ENCODE measurements at regions of chr1 and their contacts with region 1.

Region 1: GRCh38 chr1:32876341-32877210 is 5.9 kb upstream of the FNDC5 start:
- DNase-seq: no peak
- ATAC-seq: peak; percentile 90
- H3K4me3 ChIP-seq: no peak overlapping the region
- H3K27ac ChIP-seq: no peak overlapping the region
- H3K4me1 ChIP-seq: peaks cover 10% of the 10 kb centered on the region
- H3K27me3 ChIP-seq: peaks cover 5% of the 10 kb centered on the region in 2 experiments; a peak in 2 of 4 replicates
- CTCF ChIP-seq: peak; percentile 79 to 98 (median 95)
- EP300 ChIP-seq: no peak
- POLR2A ChIP-seq: no peak
- RAD21 ChIP-seq: peak; percentile 51; the same call in 1 of the 2 replicates

Region 2: DNA sequence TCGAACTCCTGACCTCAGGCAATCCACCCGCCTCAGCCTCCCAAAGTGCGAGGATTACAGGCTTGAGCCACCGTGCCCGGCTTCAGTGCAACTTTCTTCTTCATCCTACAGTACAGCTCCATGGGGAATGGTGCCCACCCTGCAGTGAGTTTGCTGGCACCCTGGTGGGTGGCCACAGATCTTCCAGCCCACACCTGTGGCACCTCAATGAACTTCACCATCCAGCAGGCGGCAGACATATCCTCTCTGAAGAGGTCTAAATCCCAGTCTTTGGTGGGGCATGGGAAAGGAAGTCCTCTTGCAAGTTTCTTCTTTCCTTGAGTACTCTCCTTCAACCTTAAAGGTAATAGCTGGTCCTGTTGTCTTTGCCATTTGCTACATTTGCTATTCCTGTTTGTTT is 355.4 kb before region 1 on chr1:
- CTCF ChIA-PET with region 1: interaction called, 13 read pairs
- POLR2A ChIA-PET with region 1: no interaction called
- RAD21 ChIA-PET with region 1: interaction called, 14 read pairs
- SMC1A ChIA-PET with region 1: interaction called, 12 read pairs
- in situ Hi-C with region 1: no loop called
- intact Hi-C with region 1: loop called (anchors 10 kb)
- DNase-seq: no peak
- ATAC-seq: peak; percentile 14
- H3K4me3 ChIP-seq: peak overlapping the region; percentile 50; the same call in 1 of the 2 replicates
- H3K27ac ChIP-seq: no peak overlapping the region
- H3K4me1 ChIP-seq: peaks cover 9% of the 10 kb centered on the region
- H3K27me3 ChIP-seq: no peaks in the 10 kb centered on the region
- CTCF ChIP-seq: 0 out of 6 replicates have a peak, but pooled peaks of 1 of the 3 experiments have one; percentile 14
- EP300 ChIP-seq: no peak
- POLR2A ChIP-seq: no peak
- RAD21 ChIP-seq: 0 out of 2 replicates have a peak, but pooled peaks have one; percentile 29

Region 3: DNA sequence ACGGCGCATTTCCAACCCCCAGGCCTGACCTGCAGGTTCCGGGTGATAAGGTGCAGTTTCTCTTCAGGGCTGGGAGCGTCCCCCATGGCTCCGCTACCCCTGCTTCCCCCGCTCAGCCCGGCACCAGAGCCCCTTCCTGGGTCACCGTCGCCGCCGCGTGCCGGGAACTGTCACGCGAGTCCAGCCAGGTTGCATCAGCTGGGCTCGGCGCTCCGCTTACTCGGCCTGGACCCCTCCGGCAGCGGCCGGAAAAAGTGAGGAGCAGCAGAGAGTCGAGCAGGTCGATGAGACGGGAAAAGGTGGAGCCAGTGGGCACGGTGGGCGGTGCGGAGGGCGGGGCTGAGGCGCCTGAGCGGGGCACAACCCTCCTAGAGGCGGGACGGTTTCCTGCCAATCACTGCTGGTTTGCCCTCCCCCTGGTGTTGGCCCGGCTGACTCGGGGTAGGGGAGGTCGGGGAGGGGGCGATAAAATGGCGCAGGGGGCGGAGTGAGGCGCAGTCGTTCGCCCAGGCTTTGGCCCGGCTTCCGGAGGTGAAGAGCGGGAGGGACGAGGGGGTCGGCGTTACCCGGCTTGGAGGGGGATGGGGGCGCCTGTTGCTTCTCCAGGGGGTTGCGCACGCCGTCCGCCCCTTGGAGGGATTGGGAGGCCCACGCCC is 59.3 kb before region 1 on chr1 and contains the starts of genes S100PBP and YARS1:
- CTCF ChIA-PET with region 1: interaction called, 22 read pairs
- POLR2A ChIA-PET with region 1: interaction called, 11 read pairs
- RAD21 ChIA-PET with region 1: interaction called, 4 read pairs
- SMC1A ChIA-PET with region 1: interaction called, 5 read pairs
- in situ Hi-C with region 1: no loop called
- intact Hi-C with region 1: loop called (anchors 5 kb)
- DNase-seq: peak; percentile 93
- ATAC-seq: peak; percentile 88
- H3K4me3 ChIP-seq: peak within 1 kb of the TSS; percentile 90
- H3K27ac ChIP-seq: peak within 1 kb of the TSS; percentile 100
- H3K4me1 ChIP-seq: peaks cover 28% of the 10 kb centered on the region
- H3K27me3 ChIP-seq: no peaks in the 10 kb centered on the region
- CTCF ChIP-seq: no peak; a peak in 1 of 6 replicates
- EP300 ChIP-seq: peak; percentile 37 to 65; a peak in 2 of 4 replicates
- POLR2A ChIP-seq: peak; percentile 92
- RAD21 ChIP-seq: no peak
- polyA plus RNA-seq, gene S100PBP: 17.0 to 19.1 TPM
- polyA plus RNA-seq, gene YARS1: 39.9 to 66.4 TPM

Region 4: GRCh38 chr1:32848354-32849063 is 28.1 kb before region 1 on chr1:
- CTCF ChIA-PET with region 1: interaction called, 10 read pairs
- POLR2A ChIA-PET with region 1: no interaction called
- RAD21 ChIA-PET with region 1: interaction called, 3 read pairs
- SMC1A ChIA-PET with region 1: interaction called, 15 read pairs
- in situ Hi-C with region 1: no loop called
- intact Hi-C with region 1: no loop called
- DNase-seq: no peak
- ATAC-seq: peak; percentile 95
- H3K4me3 ChIP-seq: no peak overlapping the region
- H3K27ac ChIP-seq: 0 out of 2 replicates have a peak overlapping the region, but pooled peaks have one; percentile 6
- H3K4me1 ChIP-seq: no peaks in the 10 kb centered on the region
- H3K27me3 ChIP-seq: no peaks in the 10 kb centered on the region
- CTCF ChIP-seq: no peak
- EP300 ChIP-seq: no peak
- POLR2A ChIP-seq: no peak
- RAD21 ChIP-seq: no peak

Region 5: GRCh38 chr1:32892368-32893197 is 16.0 kb after region 1 on chr1:
- CTCF ChIA-PET with region 1: interaction called, 36 read pairs
- POLR2A ChIA-PET with region 1: interaction called, 4 read pairs
- RAD21 ChIA-PET with region 1: interaction called, 3 read pairs
- SMC1A ChIA-PET with region 1: no interaction called
- in situ Hi-C with region 1: no loop called
- intact Hi-C with region 1: no loop called
- DNase-seq: no peak
- ATAC-seq: peak; percentile 84
- H3K4me3 ChIP-seq: no peak overlapping the region
- H3K27ac ChIP-seq: no peak overlapping the region
- H3K4me1 ChIP-seq: no peaks in the 10 kb centered on the region
- H3K27me3 ChIP-seq: peaks cover 8 to 16% of the 10 kb centered on the region in 2 experiments
- CTCF ChIP-seq: peak; percentile 32 to 43 (median 35); a peak in 5 of 6 replicates
- EP300 ChIP-seq: no peak
- POLR2A ChIP-seq: no peak
- RAD21 ChIP-seq: no peak

Region 6: DNA sequence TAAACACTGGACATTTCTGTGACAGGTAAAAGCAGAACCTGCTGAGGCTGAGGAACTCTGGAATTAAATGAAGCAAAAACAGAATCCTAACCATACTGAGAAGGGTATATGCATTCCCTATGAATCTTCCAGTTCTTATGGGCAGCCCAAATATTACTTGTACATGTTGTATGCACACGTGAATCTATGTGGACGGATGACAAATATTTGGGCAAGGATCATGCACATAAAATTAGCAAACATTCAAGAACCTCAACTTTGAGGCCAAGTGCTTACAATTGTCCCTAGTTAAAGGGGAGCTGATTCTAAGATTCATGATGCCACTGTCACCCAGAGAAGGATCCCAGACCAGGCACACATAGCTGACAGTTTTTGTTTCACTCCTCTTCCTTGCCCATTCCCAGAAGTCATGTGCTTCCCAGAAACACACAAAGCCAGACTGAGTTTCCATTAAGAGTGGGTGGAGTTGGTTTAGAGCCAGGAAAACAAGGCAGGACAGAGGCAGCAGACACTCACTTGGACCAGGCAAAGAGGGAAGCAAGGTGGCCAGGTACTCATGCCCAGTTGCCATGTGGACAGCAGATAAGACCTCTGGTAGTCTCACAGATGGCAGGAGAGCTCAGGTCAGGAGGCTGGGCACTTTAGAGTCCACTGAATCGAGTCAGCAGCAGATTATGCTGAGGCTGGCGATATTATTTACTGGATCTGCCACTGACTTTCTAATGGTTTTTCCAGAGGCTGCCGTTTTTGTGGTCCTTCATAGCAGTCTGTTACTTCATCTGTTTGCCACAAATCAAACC is 134.6 kb after region 1 on chr1:
- CTCF ChIA-PET with region 1: no interaction called
- POLR2A ChIA-PET with region 1: no interaction called
- RAD21 ChIA-PET with region 1: no interaction called
- SMC1A ChIA-PET with region 1: no interaction called
- in situ Hi-C with region 1: no loop called
- intact Hi-C with region 1: no loop called
- DNase-seq: no peak
- ATAC-seq: no peak
- H3K4me3 ChIP-seq: no peak overlapping the region
- H3K27ac ChIP-seq: no peak overlapping the region
- H3K4me1 ChIP-seq: no peaks in the 10 kb centered on the region
- H3K27me3 ChIP-seq: no peaks in the 10 kb centered on the region
- CTCF ChIP-seq: no peak
- EP300 ChIP-seq: no peak
- POLR2A ChIP-seq: no peak
- RAD21 ChIP-seq: no peak

Region 7: GRCh38 chr1:33086384-33086850 is 209.8 kb after region 1 on chr1:
- CTCF ChIA-PET with region 1: interaction called, 45 read pairs
- POLR2A ChIA-PET with region 1: no interaction called
- RAD21 ChIA-PET with region 1: interaction called, 13 read pairs
- SMC1A ChIA-PET with region 1: interaction called, 11 read pairs
- in situ Hi-C with region 1: no loop called
- intact Hi-C with region 1: loop called (anchors 1 kb)
- DNase-seq: peak; percentile 5
- ATAC-seq: peak; percentile 90
- H3K4me3 ChIP-seq: no peak overlapping the region
- H3K27ac ChIP-seq: no peak overlapping the region
- H3K4me1 ChIP-seq: peaks cover 14% of the 10 kb centered on the region
- H3K27me3 ChIP-seq: peaks cover 8 to 12% of the 10 kb centered on the region in 2 experiments
- CTCF ChIP-seq: peak; percentile 74 to 83 (median 75)
- EP300 ChIP-seq: no peak
- POLR2A ChIP-seq: no peak
- RAD21 ChIP-seq: peak; percentile 82

Region 8: DNA sequence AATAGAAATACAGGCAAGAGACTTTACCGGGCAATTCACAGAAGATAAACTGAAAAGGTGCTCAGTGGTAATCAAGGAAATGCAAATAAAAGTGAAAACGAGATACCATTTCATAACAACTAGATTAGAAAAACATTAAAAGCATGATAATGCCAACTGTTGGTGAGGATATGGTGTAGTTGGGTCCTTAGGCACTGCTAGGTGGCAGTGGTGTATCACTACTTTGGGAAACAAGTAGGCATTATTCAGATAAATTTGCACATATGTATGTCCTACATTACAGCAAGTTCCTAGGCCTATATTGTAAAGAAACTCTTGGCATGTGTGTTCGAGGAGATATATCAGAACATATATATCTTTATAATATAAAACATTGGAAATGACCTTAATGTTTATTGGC is 235.4 kb after region 1 on chr1:
- CTCF ChIA-PET with region 1: no interaction called
- POLR2A ChIA-PET with region 1: no interaction called
- RAD21 ChIA-PET with region 1: no interaction called
- SMC1A ChIA-PET with region 1: no interaction called
- in situ Hi-C with region 1: no loop called
- intact Hi-C with region 1: no loop called
- DNase-seq: no peak
- ATAC-seq: peak; percentile 79
- H3K4me3 ChIP-seq: no peak overlapping the region
- H3K27ac ChIP-seq: no peak overlapping the region
- H3K4me1 ChIP-seq: no peaks in the 10 kb centered on the region
- H3K27me3 ChIP-seq: no peaks in the 10 kb centered on the region
- CTCF ChIP-seq: peak; percentile 37 to 64 (median 44); a peak in 4 of 6 replicates
- EP300 ChIP-seq: no peak
- POLR2A ChIP-seq: no peak
- RAD21 ChIP-seq: peak; percentile 59